Activated CD4-positive, alpha-beta T cell treated with anti-CD3 and anti-CD28 coated beads, Interleukin-2, amount 10 ng/mL, durations not matched to agents 24 days and 14 days (primary cell): ENCODE measurements at regions of chr17 and their contacts with region 1.

Region 1: DNA sequence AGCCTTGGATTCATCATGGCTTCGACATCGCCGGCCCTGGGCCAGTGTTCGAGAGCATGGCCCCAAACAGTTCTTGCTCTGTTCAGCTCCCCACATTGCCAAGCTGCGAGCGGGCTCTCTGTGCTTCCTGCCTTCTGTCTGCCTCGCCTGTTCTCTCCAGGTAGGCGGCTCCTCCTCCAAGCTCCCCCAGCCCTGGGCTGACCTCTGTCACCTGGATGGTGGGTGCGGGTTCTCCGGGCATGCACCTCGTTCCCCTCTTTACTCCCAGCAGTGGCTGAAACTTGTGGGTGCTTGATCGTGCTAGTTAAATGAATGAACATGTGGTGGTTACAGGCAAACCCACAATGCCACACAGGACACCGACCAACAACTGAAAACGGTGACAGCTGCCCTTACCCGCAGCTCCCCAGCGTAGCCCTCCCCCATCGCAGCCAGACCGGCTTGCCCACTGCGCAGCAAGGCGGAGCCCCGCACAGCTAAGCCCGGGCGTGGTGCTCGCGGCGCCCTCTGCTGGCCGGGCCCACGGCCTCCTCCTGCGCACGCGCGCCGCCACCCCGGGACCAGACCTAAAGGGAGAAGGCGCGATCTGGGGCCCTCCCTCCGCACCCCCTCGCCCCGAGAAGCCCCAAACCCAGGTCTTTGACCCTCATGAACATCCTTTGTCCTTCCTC is 23.0 kb upstream of the EIF1 start:
- DNase-seq: peak; percentile 98
- H3K4me3 Mint-ChIP-seq: peak overlapping the region; percentile 89
- H3K27ac Mint-ChIP-seq: peak overlapping the region; percentile 99
- H3K4me1 Mint-ChIP-seq: peaks cover 48% of the 10 kb centered on the region
- H3K27me3 Mint-ChIP-seq: peaks cover 12% of the 10 kb centered on the region

Region 2: GRCh38 chr17:40647624-40648383 is 1017.9 kb before region 1 on chr17 and contains the start of gene SMARCE1:
- intact Hi-C with region 1: loop called (anchors 5 kb)
- DNase-seq: peak; percentile 92
- H3K4me3 Mint-ChIP-seq: peak within 1 kb of the TSS; percentile 93
- H3K27ac Mint-ChIP-seq: peak within 1 kb of the TSS; percentile 95
- H3K4me1 Mint-ChIP-seq: peaks cover 30% of the 10 kb centered on the region
- H3K27me3 Mint-ChIP-seq: no peaks in the 10 kb centered on the region
- total RNA-seq, gene SMARCE1: 122 and 125 TPM in 2 replicates

Region 3: GRCh38 chr17:40854159-40854814 is 811.4 kb before region 1 on chr17:
- intact Hi-C with region 1: loop called (anchors 10 kb)
- DNase-seq: no peak
- H3K4me3 Mint-ChIP-seq: no peak overlapping the region
- H3K27ac Mint-ChIP-seq: no peak overlapping the region
- H3K4me1 Mint-ChIP-seq: no peaks in the 10 kb centered on the region
- H3K27me3 Mint-ChIP-seq: peaks cover 27% of the 10 kb centered on the region

Region 4: DNA sequence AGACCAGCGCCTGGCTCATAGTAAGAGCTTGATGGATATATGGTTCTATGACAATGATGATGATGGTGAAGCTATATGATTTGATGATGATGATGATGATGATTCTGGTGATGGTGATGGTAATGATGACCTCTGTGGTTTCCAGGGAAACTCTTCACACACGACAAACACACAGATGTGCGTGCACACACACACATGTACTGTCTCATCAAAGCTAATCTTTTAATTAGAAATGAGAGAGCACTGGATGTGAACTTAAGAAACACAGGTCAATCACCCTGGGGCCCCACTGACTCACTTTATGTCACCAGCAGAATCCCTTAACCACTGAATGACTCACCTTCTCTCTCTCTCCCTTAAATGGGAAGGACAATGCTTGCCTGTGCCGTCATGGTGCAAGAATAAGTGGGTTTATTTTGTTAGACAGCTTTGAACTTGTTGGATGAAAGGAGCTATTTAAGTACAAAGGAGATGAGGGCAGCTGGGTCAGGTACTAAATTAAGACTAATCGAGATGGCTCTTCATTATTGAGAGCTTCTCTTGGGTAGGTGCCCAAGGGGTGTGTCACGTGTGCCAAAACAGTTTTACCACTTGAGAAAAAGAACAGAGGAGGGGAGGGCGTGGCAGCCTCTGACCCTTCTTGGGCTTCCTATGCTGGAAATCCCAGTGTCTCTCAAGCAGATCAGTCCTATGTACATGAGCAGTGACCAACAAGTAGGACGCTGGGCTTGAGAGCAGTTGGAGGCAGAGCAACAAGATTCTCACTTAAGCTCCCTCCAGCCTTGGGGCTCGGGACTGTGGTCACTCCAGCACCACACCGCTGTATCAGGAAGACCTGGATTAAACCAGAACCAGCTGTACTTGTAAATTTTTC is 261.7 kb before region 1 on chr17:
- intact Hi-C with region 1: loop called (anchors 5 kb)
- DNase-seq: peak; percentile 72
- H3K4me3 Mint-ChIP-seq: peak overlapping the region; percentile 59
- H3K27ac Mint-ChIP-seq: peak overlapping the region; percentile 84
- H3K4me1 Mint-ChIP-seq: peaks cover 25% of the 10 kb centered on the region
- H3K27me3 Mint-ChIP-seq: no peaks in the 10 kb centered on the region

Region 5: GRCh38 chr17:41500131-41500911 is 165.4 kb before region 1 on chr17:
- intact Hi-C with region 1: no loop called
- DNase-seq: no peak
- H3K4me3 Mint-ChIP-seq: no peak overlapping the region
- H3K27ac Mint-ChIP-seq: no peak overlapping the region
- H3K4me1 Mint-ChIP-seq: peaks cover 13% of the 10 kb centered on the region
- H3K27me3 Mint-ChIP-seq: no peaks in the 10 kb centered on the region

Region 6: GRCh38 chr17:41548844-41549595 is 116.7 kb before region 1 on chr17:
- intact Hi-C with region 1: loop called (anchors 1 kb)
- DNase-seq: peak; percentile 95
- H3K4me3 Mint-ChIP-seq: peak overlapping the region; percentile 66
- H3K27ac Mint-ChIP-seq: peak overlapping the region; percentile 82
- H3K4me1 Mint-ChIP-seq: peaks cover 19% of the 10 kb centered on the region
- H3K27me3 Mint-ChIP-seq: peaks cover 13% of the 10 kb centered on the region

Region 7: GRCh38 chr17:41648411-41649195 is 17.1 kb before region 1 on chr17:
- intact Hi-C with region 1: loop called (anchors 1 kb)
- DNase-seq: peak; percentile 96
- H3K4me3 Mint-ChIP-seq: peak overlapping the region; percentile 76
- H3K27ac Mint-ChIP-seq: peak overlapping the region; percentile 23
- H3K4me1 Mint-ChIP-seq: peaks cover 7% of the 10 kb centered on the region
- H3K27me3 Mint-ChIP-seq: peaks cover 1% of the 10 kb centered on the region

Region 8: DNA sequence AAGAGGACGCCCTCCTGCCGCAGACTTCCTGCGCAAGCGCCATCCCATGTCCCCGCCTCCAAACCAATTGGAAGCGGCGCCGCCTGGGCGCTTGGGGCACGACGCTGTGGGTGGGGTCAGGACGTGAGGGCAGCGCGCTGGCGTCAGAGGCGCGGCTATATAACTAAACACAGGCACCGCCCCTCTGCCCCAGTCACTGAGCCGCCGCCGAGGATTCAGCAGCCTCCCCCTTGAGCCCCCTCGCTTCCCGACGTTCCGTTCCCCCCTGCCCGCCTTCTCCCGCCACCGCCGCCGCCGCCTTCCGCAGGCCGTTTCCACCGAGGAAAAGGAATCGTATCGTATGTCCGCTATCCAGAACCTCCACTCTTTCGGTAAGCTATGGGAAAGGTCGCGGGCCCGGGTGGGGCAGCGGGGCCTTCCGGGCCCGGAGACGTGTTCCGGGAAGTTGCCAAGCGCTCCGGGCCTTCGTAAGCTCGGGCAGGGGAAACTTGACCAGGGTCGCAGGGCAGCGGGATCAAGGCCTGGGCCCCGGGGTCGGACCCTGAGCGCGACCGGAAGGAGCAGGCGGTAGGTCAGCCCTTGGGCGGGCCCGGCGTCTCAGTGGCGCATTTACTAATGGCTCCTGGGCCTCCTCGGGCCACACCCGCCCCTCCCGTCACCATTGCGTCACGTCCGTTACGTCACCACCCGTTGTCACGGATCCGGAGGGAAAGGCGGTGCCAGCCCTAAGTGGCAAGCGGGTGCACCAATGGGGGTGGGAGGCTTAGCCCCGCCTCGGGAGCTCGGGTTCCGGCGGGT is 23.2 kb after region 1 on chr17 and contains the start of gene EIF1:
- intact Hi-C with region 1: loop called (anchors 1 kb)
- DNase-seq: peak; percentile 100
- H3K4me3 Mint-ChIP-seq: peak within 1 kb of the TSS; percentile 97
- H3K27ac Mint-ChIP-seq: peak within 1 kb of the TSS; percentile 99
- H3K4me1 Mint-ChIP-seq: peaks cover 36% of the 10 kb centered on the region
- H3K27me3 Mint-ChIP-seq: no peaks in the 10 kb centered on the region
- total RNA-seq, gene EIF1: 837 and 858 TPM in 2 replicates